ENCODE measurements at regions of chr1 and their contacts with region 1.

Region 1: GRCh38 chr1:175555266-175555665 is 188.1 kb downstream of the TNR start:
- DNase-seq: no peak
- H3K4me3 ChIP-seq: no peak overlapping the region
- H3K27ac ChIP-seq: no peak overlapping the region
- H3K4me1 ChIP-seq: no peaks in the 10 kb centered on the region
- H3K27me3 ChIP-seq: no peaks in the 10 kb centered on the region
- CTCF ChIP-seq: no peak

Region 2: DNA sequence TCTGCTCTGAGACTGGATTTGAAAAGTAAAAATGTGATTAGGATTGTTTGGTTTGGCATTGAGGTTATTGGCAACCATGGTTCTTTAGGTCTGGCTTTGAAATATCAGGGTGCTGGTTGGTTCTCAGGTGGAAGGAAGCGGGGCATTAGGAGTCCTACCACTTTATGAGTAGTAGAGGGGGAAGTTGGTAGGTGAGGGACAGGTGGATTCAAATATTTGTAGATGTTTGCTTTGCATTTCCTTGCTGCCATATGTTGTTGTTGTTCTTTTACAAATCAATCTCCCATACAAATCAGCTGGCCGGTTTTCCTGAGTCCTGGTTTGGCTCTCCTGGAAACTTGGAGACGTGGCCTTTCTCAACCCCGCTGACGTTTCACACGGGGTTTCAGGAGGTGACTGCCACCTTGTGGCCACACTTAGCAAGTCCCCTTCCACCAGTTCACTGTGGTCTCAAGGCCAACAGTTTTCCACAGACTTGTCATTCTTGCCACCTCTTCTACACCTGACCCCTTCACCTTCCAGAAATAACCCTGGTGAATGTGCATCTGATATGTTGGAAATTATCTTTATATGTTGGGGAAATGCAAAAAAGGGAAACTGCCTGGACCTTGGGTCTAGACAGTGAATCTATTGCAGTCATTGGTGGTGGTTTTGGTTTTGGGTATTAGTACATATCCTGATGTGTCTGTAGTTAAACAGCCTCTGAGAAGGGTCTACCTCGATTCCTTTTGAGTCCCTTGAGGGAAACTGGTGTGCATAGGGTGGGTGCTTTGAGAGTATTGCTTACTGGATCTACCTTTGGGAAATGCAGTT is 235.6 kb before region 1 on chr1:
- CTCF ChIA-PET with region 1: no interaction called
- POLR2A ChIA-PET with region 1: no interaction called
- intact Hi-C with region 1: no loop called
- DNase-seq: peak; percentile 64
- H3K4me3 ChIP-seq: no peak overlapping the region
- H3K27ac ChIP-seq: no peak overlapping the region
- H3K4me1 ChIP-seq: no peaks in the 10 kb centered on the region
- H3K27me3 ChIP-seq: no peaks in the 10 kb centered on the region
- CTCF ChIP-seq: peak; percentile 85

Region 3: DNA sequence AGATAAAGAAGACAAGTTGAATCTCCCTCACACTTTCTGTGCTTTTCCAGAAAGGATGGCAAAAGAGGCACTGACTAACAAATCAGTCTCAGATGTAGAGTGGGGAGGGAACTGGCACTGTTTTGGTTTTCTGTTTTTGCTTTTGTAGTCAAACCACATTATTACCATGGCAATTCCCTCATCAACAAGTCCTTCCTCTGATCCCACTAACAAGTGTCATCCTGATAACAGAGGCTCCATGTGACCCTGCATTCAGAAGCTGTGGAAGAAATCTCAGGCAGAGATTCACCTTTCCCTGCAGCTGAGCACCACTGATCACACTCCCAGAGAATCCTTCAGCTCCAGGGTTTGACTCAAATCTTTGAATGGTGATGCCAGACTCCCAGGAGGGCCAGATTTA is 15.3 kb before region 1 on chr1:
- CTCF ChIA-PET with region 1: no interaction called
- POLR2A ChIA-PET with region 1: interaction called, 11 read pairs
- intact Hi-C with region 1: no loop called
- DNase-seq: no peak
- H3K4me3 ChIP-seq: no peak overlapping the region
- H3K27ac ChIP-seq: no peak overlapping the region
- H3K4me1 ChIP-seq: peaks cover 3% of the 10 kb centered on the region
- H3K27me3 ChIP-seq: no peaks in the 10 kb centered on the region
- CTCF ChIP-seq: no peak